Heart right ventricle (tissue), 16 donors: ENCODE measurements at regions of chr7 and their contacts with region 1.

Region 1: DNA sequence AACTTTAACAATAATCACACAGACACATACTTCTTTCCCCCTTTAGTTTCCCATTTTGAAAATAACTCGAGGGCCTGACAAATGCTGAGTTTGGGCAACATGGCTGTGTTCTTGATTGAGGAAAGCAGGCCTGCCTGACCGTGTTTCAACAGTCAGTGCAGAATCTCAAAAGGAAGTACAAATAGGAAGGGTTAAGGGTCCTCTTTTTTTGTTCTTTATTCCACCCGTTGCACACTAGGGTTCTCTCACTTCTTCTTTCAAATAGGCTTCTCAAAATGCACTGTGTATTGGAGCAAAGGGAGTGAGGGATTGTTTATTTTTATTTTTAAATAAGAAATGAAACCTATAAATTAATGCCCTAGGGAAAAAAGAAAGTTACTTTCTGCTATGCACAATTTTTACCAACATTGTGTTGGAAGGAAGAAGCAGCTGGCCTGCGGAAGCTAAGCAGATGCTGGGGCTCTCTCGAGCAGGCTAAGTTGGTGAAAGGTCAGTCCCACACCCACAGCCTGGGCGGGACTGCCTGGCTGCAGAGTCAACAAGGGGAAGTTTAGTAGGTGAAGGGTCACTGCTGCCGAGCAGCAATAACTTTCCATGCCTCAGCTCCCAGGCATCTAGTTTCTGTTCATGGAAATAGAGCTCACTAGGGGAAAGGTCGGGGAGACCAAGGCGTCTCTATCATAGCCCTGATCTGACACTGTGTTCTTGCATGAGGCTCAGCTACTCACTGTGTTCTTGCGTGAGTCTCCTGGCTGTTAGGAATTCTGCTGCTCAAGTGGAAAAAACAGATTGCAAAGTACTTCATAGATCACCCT is 12.2 kb upstream of the PDK4 start:
- DNase-seq: peak; percentile 89 to 95
- ATAC-seq: peak; percentile 97 to 100 (median 99)
- H3K4me3 ChIP-seq: peak overlapping the region in 6 of 10 donors; percentile 27 to 41 (median 35)
- H3K27ac ChIP-seq: peak overlapping the region; percentile 60 to 96 (median 88)
- H3K4me1 ChIP-seq: peaks cover 4 to 77% (median 46%) of the 10 kb centered on the region in 9 donors
- H3K27me3 ChIP-seq: no peaks in the 10 kb centered on the region
- CTCF ChIP-seq: no peak

Region 2: DNA sequence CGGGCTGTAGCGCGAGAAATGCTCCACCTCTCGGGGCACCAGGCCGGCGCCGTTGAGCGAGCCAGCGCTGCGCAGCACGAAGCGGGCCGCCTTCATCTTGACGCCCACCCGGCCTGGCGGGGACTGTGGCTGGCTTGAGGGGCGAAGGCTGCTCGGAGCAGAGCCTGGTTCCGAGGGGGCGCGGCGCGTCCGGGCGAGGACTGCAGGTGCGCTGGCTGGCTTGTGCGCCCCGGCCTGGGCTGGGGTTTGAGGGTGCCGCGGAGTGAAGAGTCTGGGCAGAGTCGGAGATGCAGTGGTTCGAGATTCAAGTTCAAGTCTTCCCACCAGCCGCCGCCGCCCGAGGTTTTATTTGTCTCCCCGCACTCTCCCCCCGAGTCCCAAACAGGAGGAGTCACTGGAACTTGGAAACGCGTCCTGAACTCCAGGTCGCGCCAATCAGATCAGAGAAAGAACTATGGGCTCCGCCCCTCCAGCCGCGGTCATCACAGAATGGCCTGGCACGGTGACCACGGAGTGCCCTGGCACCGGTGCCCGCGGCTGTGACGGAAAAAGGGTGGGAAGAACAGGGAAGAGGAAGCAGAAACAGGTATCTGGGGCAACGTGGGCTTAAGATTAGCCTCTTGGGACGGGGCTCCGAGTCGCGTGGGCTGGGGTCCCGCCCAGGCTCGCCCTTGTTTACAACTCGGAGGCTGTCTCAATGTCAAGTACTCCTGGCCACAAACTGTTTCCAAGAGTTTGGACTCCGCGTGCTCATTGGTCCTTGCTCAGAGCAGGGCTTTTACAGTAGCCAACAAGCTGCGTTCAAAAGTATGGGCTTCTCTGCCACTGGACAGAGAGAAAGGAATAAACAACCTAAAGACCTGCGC is 12.1 kb before region 1 on chr7 and contains the start of gene PDK4:
- intact Hi-C with region 1: loop called in 2 of 10 experiments (anchors 1 kb)
- DNase-seq: peak; percentile 93 to 95
- ATAC-seq: peak; percentile 87 to 98 (median 96)
- H3K4me3 ChIP-seq: peak within 1 kb of the TSS; percentile 47 to 91 (median 80)
- H3K27ac ChIP-seq: peak within 1 kb of the TSS; percentile 89 to 99 (median 94)
- H3K4me1 ChIP-seq: peaks cover 0 to 70% (median 51%) of the 10 kb centered on the region in 9 donors
- H3K27me3 ChIP-seq: no peaks in the 10 kb centered on the region
- CTCF ChIP-seq: no peak
- total RNA-seq, gene PDK4: 63.0 to 2,183 (median 269) TPM